Panc1 (cell line): ENCODE measurements at regions of chr2 and their contacts with region 1.

Region 1: DNA sequence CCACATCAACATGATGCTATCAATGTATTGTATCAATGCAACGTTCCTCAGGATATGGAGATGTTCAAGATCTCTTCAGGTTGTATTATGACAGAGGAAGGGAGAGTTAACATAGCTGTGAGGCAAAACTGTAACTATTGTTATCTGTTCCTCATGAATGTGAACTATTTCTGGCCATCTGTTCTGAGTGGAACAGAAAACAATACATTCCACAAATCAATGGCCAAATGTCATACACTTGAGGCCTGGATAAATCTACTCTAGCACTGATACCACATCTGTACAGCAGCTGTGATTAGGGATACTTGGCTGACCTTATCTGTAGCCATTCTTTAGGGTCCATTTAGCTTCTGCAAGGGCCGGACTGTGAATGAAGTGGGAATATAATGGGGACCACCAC is 447.9 kb downstream of the IRS1 start:
- DNase-seq: no peak
- ATAC-seq: no peak
- H3K4me3 ChIP-seq: no peak overlapping the region
- H3K27ac ChIP-seq: no peak overlapping the region
- H3K4me1 ChIP-seq: no peaks in the 10 kb centered on the region
- H3K27me3 ChIP-seq: no peaks in the 10 kb centered on the region
- CTCF ChIP-seq: no peak

Region 2: DNA sequence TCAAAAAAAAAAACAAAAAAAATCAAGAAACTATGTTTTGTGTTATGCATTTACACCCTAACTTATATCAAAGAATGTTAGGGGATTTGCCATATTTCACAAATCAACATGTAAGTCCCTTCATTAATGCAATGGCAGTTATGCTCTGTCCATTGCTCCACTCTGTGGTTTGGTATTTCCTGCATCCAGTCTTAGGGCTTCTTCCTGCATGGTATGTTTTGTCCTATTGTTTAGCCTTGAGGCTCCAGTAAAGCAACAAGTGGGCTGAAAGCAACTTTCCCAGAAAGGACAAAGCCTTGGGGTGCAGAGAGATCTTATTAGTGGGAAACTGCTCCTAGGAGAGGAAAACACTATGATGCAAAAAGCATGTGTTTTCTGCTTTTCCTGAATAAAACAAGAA is 26.2 kb before region 1 on chr2:
- CTCF ChIA-PET with region 1: no interaction called
- POLR2A ChIA-PET with region 1: interaction called, 11 read pairs
- in situ Hi-C with region 1: no loop called
- intact Hi-C with region 1: no loop called
- DNase-seq: no peak
- ATAC-seq: no peak
- H3K4me3 ChIP-seq: no peak overlapping the region
- H3K27ac ChIP-seq: no peak overlapping the region
- H3K4me1 ChIP-seq: no peaks in the 10 kb centered on the region
- H3K27me3 ChIP-seq: no peaks in the 10 kb centered on the region
- CTCF ChIP-seq: no peak